A549 (cell line): ENCODE measurements at regions of chr10 and their contacts with region 1.

Region 1: DNA sequence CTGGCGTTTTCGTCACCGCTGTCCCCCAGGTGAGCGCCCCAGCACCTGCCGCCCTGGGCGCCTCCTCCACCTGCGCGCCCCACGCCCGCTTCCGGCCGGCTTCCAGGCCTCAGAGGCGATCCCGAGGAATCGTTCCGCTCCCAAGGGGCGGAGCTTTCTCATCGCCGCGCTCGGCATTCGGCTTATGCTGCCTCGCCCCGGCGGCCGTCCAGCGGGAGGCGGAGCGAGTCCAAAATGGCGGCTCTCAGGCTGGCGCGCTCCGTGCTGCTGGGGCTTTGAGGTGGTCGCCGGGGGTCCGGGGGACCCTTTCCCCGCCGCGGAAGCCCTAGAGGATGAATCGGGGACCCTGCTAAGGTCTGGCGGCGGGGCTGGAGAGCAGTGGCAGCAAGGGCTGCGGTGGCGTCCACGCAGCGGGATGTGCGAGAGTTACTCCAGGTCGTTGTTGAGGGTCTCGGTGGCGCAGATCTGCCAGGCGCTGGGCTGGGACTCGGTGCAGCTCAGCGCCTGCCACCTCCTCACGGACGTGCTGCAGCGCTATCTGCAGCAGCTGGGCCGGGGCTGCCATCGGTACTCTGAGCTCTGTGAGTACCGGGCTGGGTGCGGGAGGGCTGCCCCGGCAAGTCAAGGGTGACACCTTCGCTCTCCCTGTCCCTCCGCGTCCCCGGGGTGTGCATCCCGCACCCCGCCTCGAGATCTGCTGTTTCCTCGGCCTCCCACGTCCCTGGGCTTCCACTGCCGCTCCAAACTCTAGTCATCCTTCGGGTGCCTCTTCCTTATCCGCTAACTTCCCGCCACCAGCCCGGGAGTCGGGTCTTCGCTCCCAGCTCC is at the start of gene TAF3:
- DNase-seq: peak; percentile 49 to 88
- ATAC-seq: peak; percentile 65 to 89
- H3K4me3 ChIP-seq: peak within 1 kb of the TSS; percentile 84
- H3K27ac ChIP-seq: peak within 1 kb of the TSS; percentile 83 to 93
- H3K4me1 ChIP-seq: peaks cover 12% of the 10 kb centered on the region; the same call in 2 of the 3 replicates
- CTCF ChIP-seq: no peak
- EP300 ChIP-seq: no peak
- POLR2A ChIP-seq: peak; percentile 88
- RAD21 ChIP-seq: no peak
- polyA plus RNA-seq, gene TAF3: 4.7 and 6.1 TPM in 2 replicates

Region 2: DNA sequence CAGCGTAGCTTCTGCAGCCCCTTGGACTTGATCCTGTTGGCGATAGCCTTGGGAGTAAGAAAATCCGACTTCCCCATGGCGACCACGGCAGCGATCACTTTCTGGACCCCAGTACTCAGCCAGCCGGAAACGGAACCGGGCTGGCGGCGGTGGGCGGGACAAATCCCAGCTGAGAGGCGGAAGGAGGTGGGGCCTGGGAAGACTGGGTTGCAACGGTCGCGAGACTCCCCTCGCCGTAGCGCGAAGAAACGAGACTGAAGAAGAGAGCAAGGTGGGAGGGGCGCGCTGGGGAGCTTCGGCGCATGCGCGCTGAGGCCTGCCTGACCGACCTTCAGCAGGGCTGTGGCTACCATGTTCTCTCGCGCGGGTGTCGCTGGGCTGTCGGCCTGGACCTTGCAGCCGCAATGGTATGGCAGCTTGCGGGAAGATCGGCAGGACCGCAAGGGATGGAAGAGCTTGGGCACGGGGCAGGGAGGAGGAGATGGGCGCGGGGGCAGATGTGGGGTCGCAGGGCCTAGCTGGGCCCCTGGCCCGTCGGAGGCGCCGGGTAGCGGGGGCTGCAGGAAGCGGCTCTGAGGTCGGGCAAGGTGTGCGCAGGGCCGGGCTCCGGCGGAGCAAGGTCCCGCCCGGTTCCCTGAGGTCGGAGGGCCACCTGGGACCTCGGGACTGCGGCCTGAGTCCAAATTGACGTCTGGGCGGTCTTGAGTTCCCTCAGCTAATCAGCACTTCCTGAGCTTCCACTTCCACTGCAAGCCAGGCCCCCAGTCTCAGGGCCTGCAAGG is 30.5 kb before region 1 on chr10 and contains the starts of genes ATP5F1C and KIN:
- CTCF ChIA-PET with region 1: interaction called, 3 read pairs
- POLR2A ChIA-PET with region 1: interaction called, 30 read pairs
- DNase-seq: peak; percentile 96 to 97
- ATAC-seq: peak; percentile 96 to 97
- H3K4me3 ChIP-seq: peak within 1 kb of the TSS; percentile 99
- H3K27ac ChIP-seq: peak within 1 kb of the TSS; percentile 94 to 97
- H3K4me1 ChIP-seq: peaks cover 19% of the 10 kb centered on the region
- CTCF ChIP-seq: no peak
- EP300 ChIP-seq: no peak
- POLR2A ChIP-seq: peak; percentile 86
- RAD21 ChIP-seq: no peak
- polyA plus RNA-seq, gene ATP5F1C: 532 and 555 TPM in 2 replicates
- polyA plus RNA-seq, gene KIN: 10.0 and 19.0 TPM in 2 replicates

Region 3: DNA sequence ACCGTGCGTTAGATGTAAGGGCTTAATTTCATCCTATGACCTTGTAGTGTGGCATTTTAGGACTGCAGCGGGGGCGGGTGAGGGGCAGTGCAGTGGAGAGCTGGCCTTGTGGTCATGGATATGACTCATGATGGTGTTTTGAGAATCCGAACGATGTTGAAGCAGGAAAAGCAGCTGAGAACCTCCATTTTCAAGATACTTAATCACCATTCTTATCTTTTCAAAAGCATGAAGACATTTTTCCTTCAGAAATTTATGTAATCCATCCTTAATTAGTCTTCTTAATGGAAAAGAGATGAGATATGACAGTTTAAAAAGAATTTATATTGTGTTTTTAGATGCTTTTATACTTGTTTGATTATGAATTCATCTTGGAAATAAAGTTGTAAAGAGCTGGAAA is 20.9 kb before region 1 on chr10:
- CTCF ChIA-PET with region 1: interaction called, 3 read pairs
- POLR2A ChIA-PET with region 1: interaction called, 18 read pairs
- DNase-seq: peak; percentile 25 to 42
- ATAC-seq: peak; percentile 66 to 70; a peak in 4 of 6 replicates
- H3K4me3 ChIP-seq: no peak overlapping the region
- H3K27ac ChIP-seq: no peak overlapping the region
- H3K4me1 ChIP-seq: peaks cover 16% of the 10 kb centered on the region; the same call in 2 of the 3 replicates
- CTCF ChIP-seq: no peak
- EP300 ChIP-seq: no peak
- POLR2A ChIP-seq: no peak
- RAD21 ChIP-seq: no peak